Heart left ventricle (tissue), 16 donors: ENCODE measurements at regions of chr19 and their contacts with region 1.

Region 1: GRCh38 chr19:51016798-51017683 is 2.5 kb downstream of the KLK10 start:
- DNase-seq: peak in 3 of 5 donors; percentile 30 to 55 (median 43)
- ATAC-seq: peak in 3 of 4 donors; percentile 39 to 65 (median 57)
- H3K4me3 ChIP-seq: peak overlapping the region in 11 of 12 donors; percentile 7 to 48 (median 37)
- H3K27ac ChIP-seq: no peak overlapping the region
- H3K4me1 ChIP-seq: peaks cover 0 to 33% (median 15%) of the 10 kb centered on the region in 12 donors
- H3K27me3 ChIP-seq: peaks cover 30 to 78% (median 56%) of the 10 kb centered on the region in 9 donors
- CTCF ChIP-seq: peak; percentile 28 to 76 (median 60)
- POLR2A ChIP-seq: no peak

Region 2: GRCh38 chr19:50933640-50934039 is 83.4 kb before region 1 on chr19:
- intact Hi-C with region 1: loop called in 2 of 10 experiments (anchors 10 kb)
- DNase-seq: no peak
- ATAC-seq: no peak
- H3K4me3 ChIP-seq: no peak overlapping the region
- H3K27ac ChIP-seq: no peak overlapping the region
- H3K4me1 ChIP-seq: no peaks in the 10 kb centered on the region
- H3K27me3 ChIP-seq: peaks cover 0 to 38% (median 8%) of the 10 kb centered on the region in 9 donors
- CTCF ChIP-seq: no peak
- POLR2A ChIP-seq: no peak

Region 3: GRCh38 chr19:51086153-51086850 is 69.3 kb after region 1 on chr19:
- intact Hi-C with region 1: loop called in 1 of 10 experiments (anchors 5 kb)
- DNase-seq: no peak
- ATAC-seq: no peak
- H3K4me3 ChIP-seq: no peak overlapping the region
- H3K27ac ChIP-seq: no peak overlapping the region
- H3K4me1 ChIP-seq: no peaks in the 10 kb centered on the region
- H3K27me3 ChIP-seq: no peaks in the 10 kb centered on the region
- CTCF ChIP-seq: no peak
- POLR2A ChIP-seq: no peak

Region 4: DNA sequence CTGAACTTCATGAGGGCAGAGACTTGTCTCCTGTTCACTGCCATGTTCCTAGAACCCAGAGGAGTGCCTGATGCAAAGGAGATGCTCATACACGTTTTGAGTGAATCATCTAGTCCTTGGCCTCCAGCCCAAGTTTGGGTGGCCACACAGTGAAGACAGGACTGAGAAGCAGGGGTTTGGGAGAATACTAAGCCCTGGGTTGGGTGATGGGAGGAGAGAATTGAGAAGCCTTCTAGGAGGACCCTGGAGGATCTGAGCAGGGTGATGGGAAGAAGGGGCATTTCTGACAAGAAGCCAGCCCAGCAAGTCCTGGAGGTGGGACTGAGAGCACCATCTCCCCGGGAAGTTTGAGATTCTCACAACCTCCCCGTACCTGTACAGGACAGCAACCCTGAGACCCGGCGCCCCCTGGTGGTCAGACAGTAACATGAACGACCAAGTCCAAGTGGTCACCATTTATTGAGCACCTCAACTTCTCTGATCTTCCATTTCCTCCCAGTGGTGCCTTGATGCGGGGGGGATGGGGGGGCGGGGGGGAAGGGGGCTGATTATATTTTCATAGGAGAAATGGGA is 80.2 kb after region 1 on chr19:
- intact Hi-C with region 1: loop called in 9 of 10 experiments (anchors 1 to 5 kb)
- DNase-seq: peak; percentile 45 to 88 (median 63)
- ATAC-seq: peak in 3 of 4 donors; percentile 44 to 62 (median 52)
- H3K4me3 ChIP-seq: no peak overlapping the region
- H3K27ac ChIP-seq: no peak overlapping the region
- H3K4me1 ChIP-seq: peaks cover 0 to 27% (median 3%) of the 10 kb centered on the region in 12 donors
- H3K27me3 ChIP-seq: no peaks in the 10 kb centered on the region
- CTCF ChIP-seq: peak; percentile 42 to 66 (median 56)
- POLR2A ChIP-seq: no peak

Region 5: DNA sequence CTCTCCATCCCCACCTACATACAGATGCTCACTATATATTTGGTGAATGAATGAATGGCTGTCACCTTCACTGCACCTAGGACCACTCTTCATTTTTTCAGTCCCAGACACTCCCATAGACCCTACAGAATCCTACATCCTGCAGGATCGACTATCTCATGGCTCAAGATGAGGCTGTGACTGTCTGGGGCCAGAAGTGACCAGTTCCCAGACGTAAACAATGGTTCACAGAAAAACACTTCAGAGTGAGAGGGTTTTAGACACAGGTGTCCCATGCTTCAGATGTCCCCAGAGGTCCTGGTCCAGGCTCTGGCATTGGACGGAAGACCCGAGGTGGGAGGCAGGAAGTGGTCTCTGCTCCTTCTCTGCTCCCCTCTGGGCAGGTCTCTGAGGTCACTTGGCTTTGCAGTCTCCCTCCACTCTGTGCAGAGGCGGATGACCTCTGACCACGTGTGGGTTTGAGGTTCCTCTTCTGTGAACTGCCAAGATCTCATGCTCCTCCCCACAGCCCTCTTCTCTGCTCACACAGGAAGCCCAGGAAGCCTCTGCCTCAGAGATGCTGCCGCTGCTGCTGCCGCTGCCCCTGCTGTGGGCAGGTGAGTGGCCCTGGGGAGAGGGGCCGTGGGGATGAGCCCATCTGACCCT is 149.9 kb after region 1 on chr19:
- intact Hi-C with region 1: loop called in 7 of 10 experiments (anchors 1 to 10 kb)
- DNase-seq: peak in 2 of 5 donors; percentile 41 to 42
- ATAC-seq: peak in 3 of 4 donors; percentile 56 to 78 (median 65)
- H3K4me3 ChIP-seq: peak overlapping the region in 1 of 12 donors; percentile 23
- H3K27ac ChIP-seq: no peak overlapping the region
- H3K4me1 ChIP-seq: peaks cover 0 to 21% (median 0%) of the 10 kb centered on the region in 12 donors
- H3K27me3 ChIP-seq: peaks cover 0 to 17% (median 2%) of the 10 kb centered on the region in 9 donors
- CTCF ChIP-seq: no peak
- POLR2A ChIP-seq: no peak

Region 6: GRCh38 chr19:51179256-51179655 is 162.2 kb after region 1 on chr19:
- intact Hi-C with region 1: loop called in 1 of 10 experiments (anchors 10 kb)
- DNase-seq: no peak
- ATAC-seq: peak in 3 of 4 donors; percentile 28 to 53 (median 42)
- H3K4me3 ChIP-seq: no peak overlapping the region
- H3K27ac ChIP-seq: peak overlapping the region in 4 of 12 donors; percentile 19 to 42 (median 33)
- H3K4me1 ChIP-seq: no peaks in the 10 kb centered on the region
- H3K27me3 ChIP-seq: peaks cover 0 to 25% (median 3%) of the 10 kb centered on the region in 9 donors
- CTCF ChIP-seq: no peak
- POLR2A ChIP-seq: no peak

Region 7: DNA sequence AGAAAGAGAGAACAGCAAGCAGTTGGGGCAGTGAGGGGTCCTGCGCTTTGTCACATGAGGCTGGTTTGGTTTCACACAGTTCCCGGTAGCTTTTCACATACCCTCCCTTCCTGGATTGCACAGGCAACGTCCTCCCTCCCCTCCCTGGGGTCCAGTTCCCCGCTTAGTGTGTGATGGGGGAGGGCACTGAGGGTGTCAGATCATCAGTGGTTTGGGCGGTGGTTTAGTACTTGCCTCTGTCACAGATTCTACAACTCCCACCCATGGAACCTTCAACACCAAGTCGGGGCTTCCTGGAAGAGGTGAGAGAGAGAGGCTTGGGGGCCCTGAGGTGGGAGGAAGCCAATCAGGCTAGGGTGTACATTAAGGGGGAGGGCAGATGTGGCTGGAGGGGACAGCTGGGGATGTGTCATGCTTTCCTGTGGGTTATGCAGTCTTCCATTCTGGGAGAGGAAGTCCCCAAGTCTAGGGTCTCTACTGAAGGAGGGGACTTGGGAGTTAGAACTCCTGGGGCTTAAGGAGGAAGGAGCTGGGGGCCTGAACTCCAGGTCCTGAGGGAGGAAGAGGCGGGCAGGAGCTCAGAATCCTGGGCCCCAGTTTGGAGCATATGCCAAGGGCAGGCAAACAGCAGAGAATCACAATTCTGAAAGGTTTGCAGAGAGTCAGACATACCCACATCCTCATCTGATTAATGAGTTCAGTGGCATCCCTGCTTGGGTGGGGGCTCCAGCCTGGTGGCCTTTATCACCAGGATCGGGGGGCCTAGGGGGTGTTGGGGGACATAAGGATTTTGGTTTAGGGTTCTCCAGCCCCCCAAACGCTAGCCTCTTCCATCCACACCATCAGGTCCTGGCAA is 355.8 kb after region 1 on chr19 and contains the start of gene NKG7:
- intact Hi-C with region 1: no loop called
- DNase-seq: no peak
- ATAC-seq: no peak
- H3K4me3 ChIP-seq: peak within 1 kb of the TSS in 2 of 12 donors; percentile 10 to 50
- H3K27ac ChIP-seq: peak within 1 kb of the TSS in 1 of 12 donors; percentile 83
- H3K4me1 ChIP-seq: peaks cover 0 to 30% (median 2%) of the 10 kb centered on the region in 12 donors
- H3K27me3 ChIP-seq: no peaks in the 10 kb centered on the region
- CTCF ChIP-seq: no peak
- POLR2A ChIP-seq: no peak
- total RNA-seq, gene NKG7: 1.0 to 31.2 (median 2.4) TPM in 7 of 9 donors, not detected in the others